ENCODE measurements at regions of chr4 and their contacts with region 1.

Region 1: DNA sequence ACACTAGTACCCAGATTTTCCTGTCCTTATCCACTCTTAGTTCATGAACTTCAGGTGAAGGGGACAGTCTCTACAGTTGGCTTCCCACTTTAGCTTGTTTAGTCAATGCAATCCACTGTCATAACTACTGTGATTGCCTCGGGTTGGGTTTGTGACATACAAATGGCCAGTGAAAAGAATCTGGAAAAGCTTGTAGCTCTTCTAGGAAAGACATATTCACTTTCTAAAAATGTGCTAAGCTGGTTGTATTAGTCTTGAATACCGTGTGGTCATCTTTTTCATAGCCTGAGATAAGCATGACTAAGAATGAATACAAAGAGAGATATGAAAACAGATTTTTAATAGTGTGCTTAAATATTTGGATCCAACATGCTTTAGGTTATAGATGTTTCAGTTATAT is 1443.5 kb upstream of the IGFBP7 start:
- DNase-seq: no peak
- H3K4me3 ChIP-seq: no peak overlapping the region
- CTCF ChIP-seq: no peak

Region 2: DNA sequence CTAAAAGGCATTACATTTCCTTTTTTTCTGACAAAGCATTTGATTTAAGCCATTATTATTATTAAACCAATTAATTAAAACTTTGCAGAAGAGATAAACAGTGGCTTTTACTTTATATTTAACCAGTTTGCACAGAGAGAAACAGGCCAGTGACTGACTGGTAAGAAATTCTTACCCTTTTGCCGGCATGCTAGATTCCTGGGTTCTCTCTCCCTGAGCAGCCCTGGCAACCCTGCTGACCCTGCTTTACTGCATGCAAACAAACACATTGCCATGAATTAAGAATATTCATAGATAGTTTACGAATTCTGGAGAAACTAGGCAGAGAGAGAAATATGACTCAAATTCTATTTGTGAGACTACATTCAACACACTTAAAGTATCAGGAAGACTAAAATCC is 62.1 kb before region 1 on chr4:
- in situ Hi-C with region 1: loop called (anchors 5 kb)
- DNase-seq: no peak
- H3K4me3 ChIP-seq: no peak overlapping the region
- CTCF ChIP-seq: no peak

Measured in astrocyte of the cerebellum (primary cell).